Activated CD4-positive, alpha-beta memory T cell treated with anti-CD3 and anti-CD28 coated beads for 36 hours (primary cell): ENCODE measurements at regions of chr2 and their contacts with region 1.

Region 1: GRCh38 chr2:54522624-54523281 is 66.6 kb downstream of the SPTBN1 start:
- DNase-seq: peak; percentile 64
- H3K4me3 Mint-ChIP-seq: no peak overlapping the region
- H3K27ac Mint-ChIP-seq: no peak overlapping the region
- H3K4me1 Mint-ChIP-seq: peaks cover 13% of the 10 kb centered on the region
- H3K27me3 Mint-ChIP-seq: no peaks in the 10 kb centered on the region

Region 2: DNA sequence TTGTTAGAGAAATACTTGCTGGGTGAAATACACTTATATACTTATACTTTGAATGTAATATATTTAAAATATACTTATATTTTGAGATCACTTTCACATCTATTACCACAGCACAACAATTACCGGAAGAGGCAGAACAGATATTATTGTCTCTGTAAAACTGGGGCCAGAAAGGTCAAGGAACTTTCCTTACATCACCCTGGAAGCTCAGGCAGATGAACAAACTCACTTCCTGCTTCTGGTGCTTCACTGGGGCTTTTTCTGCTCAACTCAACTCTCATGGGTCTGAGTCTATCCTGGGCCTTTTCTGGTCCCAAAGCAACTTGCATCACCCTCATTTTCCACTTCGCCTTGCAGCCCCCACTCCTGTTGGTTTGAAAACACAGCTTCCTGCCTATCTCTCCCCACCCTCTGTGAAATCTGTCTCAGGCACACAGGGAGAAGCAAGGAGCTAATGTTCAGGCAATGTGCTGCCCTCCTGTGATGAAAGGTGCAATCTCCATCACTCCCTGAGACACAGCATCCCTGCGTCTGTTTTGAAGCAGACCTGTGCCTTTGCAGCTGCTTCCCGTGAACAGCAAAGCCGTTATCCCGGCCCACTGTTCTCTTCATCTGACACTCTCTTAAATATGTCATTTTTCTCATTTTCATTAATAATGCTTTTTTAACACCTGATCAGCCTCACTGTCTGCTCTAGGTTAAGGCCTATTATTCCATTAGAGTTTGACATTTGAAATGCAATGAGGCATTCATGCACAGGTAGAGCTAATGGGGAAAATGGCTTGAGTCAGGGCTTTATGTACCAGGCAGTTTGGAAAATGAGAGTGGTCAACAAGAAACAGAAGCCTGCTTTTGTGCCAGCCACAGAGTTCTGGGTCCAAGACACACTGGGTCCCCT is 1007.1 kb before region 1 on chr2:
- CTCF ChIA-PET with region 1: no interaction called
- POLR2A ChIA-PET with region 1: no interaction called
- intact Hi-C with region 1: no loop called
- DNase-seq: no peak
- H3K4me3 Mint-ChIP-seq: no peak overlapping the region
- H3K27ac Mint-ChIP-seq: no peak overlapping the region
- H3K4me1 Mint-ChIP-seq: no peaks in the 10 kb centered on the region
- H3K27me3 Mint-ChIP-seq: peaks cover 4% of the 10 kb centered on the region

Region 3: GRCh38 chr2:54106631-54107454 is 415.9 kb before region 1 on chr2:
- CTCF ChIA-PET with region 1: interaction called, 5 read pairs
- POLR2A ChIA-PET with region 1: no interaction called
- intact Hi-C with region 1: loop called (anchors 1 kb)
- DNase-seq: peak; percentile 58
- H3K4me3 Mint-ChIP-seq: no peak overlapping the region
- H3K27ac Mint-ChIP-seq: no peak overlapping the region
- H3K4me1 Mint-ChIP-seq: peaks cover 5% of the 10 kb centered on the region
- H3K27me3 Mint-ChIP-seq: no peaks in the 10 kb centered on the region

Region 4: DNA sequence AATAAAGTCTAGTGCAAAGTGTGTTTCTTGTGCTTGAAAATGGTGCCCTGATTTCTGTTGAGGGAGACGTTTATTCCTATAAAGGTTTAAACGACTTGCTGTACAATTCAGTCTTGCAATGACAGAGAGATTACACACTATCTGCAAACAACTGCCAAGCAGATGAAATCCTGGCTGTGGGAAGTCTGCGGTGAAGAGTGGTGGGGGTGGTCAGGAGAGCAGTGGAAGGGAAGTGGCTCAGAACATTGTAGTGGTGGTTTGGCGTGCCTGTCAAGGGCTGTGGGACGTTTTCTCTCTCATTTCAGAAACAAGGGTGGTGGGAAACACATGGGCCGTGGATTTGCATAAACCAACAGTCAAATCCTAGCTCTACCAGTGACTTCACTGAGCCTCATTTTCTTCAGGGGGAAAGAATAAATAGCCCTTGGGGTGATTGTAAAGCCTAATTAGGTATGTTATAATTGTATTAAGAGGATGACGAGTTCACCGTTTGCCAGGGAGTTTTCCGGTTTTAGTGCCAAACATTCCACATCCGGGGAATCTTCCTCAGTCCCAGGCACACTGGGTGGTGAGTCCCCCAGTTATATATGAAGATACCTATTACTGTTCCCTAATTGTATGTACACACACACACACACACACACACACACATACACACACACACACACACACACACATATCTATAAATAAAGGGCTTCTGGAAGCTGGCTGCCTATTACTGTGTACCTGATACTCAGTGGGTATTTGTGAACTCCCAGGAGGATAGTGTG is 48.4 kb after region 1 on chr2:
- CTCF ChIA-PET with region 1: interaction called, 3 read pairs
- POLR2A ChIA-PET with region 1: no interaction called
- intact Hi-C with region 1: loop called (anchors 5 kb)
- DNase-seq: peak; percentile 93
- H3K4me3 Mint-ChIP-seq: peak overlapping the region; percentile 36
- H3K27ac Mint-ChIP-seq: peak overlapping the region; percentile 96
- H3K4me1 Mint-ChIP-seq: peaks cover 85% of the 10 kb centered on the region
- H3K27me3 Mint-ChIP-seq: no peaks in the 10 kb centered on the region

Region 5: GRCh38 chr2:54657664-54658083 is 134.9 kb after region 1 on chr2:
- CTCF ChIA-PET with region 1: interaction called, 42 read pairs
- POLR2A ChIA-PET with region 1: no interaction called
- intact Hi-C with region 1: no loop called
- DNase-seq: peak; percentile 55
- H3K4me3 Mint-ChIP-seq: no peak overlapping the region
- H3K27ac Mint-ChIP-seq: peak overlapping the region; percentile 57
- H3K4me1 Mint-ChIP-seq: peaks cover 18% of the 10 kb centered on the region
- H3K27me3 Mint-ChIP-seq: no peaks in the 10 kb centered on the region

Region 6: DNA sequence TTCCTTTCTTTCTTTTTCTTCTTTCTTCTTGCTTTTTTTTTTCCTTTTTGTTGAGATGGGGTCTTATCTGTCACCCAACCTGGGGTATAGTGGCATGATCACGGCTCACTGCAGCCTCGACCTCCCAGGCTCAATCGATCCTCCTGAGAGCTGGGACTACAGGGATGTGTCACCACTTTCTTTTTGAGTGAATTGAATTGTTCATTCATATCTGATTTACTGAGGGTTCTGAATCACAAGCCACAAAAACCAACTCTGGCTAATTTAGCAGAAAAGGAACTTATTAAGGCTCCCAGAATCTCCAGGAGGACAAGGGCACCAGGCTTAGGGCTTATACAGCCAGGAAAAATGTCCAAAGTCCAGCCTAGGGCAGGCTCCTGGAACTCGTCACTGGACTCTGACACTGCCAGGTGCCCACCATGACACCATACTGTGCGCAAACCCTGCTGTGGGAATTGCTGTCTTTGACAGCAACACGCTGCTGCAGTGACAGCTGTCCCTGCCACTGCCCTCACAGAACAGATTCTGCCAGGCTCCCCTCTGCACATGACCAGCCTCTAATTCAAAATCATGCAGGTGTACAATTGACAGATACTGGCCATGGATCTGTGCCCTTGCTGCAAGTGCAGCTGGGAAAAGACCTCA is 157.8 kb after region 1 on chr2:
- CTCF ChIA-PET with region 1: interaction called, 10 read pairs
- POLR2A ChIA-PET with region 1: no interaction called
- intact Hi-C with region 1: no loop called
- DNase-seq: peak; percentile 65
- H3K4me3 Mint-ChIP-seq: peak overlapping the region; percentile 47
- H3K27ac Mint-ChIP-seq: no peak overlapping the region
- H3K4me1 Mint-ChIP-seq: peaks cover 21% of the 10 kb centered on the region
- H3K27me3 Mint-ChIP-seq: peaks cover 68% of the 10 kb centered on the region

Region 7: DNA sequence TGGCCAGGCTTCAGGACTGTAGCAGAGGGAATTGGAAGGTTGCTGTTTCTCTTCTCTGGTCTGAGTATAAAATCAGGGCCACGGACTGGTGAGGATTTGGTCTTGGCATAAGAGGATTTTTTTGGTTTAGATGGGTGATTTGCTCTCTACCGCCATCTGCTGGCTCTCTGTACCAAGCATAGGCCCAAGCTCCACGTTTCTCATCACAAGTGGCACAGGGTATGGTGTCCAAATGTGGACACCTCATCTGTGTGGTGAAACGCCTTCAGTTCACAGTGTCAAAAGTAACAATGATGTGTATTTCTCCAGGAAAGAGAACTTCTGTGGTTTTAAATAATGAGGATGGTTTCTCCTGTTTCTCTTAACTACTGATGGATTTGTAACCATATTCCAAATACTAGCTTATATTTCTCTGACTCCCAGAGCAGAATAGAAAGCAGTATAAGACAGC is 315.9 kb after region 1 on chr2:
- CTCF ChIA-PET with region 1: interaction called, 25 read pairs
- POLR2A ChIA-PET with region 1: no interaction called
- intact Hi-C with region 1: loop called (anchors 1 kb)
- DNase-seq: peak; percentile 73
- H3K4me3 Mint-ChIP-seq: no peak overlapping the region
- H3K27ac Mint-ChIP-seq: no peak overlapping the region
- H3K4me1 Mint-ChIP-seq: no peaks in the 10 kb centered on the region
- H3K27me3 Mint-ChIP-seq: no peaks in the 10 kb centered on the region